Heart left ventricle (tissue), 16 donors: ENCODE measurements at regions of chr5 and their contacts with region 1.

Region 1: GRCh38 chr5:173283318-173284288 is 44.6 kb downstream of the STC2 start:
- DNase-seq: peak; percentile 78 to 92 (median 87)
- ATAC-seq: peak; percentile 49 to 89 (median 89)
- H3K4me3 ChIP-seq: peak overlapping the region in 10 of 12 donors; percentile 16 to 45 (median 36)
- H3K27ac ChIP-seq: peak overlapping the region in 8 of 12 donors; percentile 12 to 74 (median 63)
- H3K4me1 ChIP-seq: peaks cover 0 to 27% (median 4%) of the 10 kb centered on the region in 12 donors
- H3K27me3 ChIP-seq: peaks cover 0 to 45% (median 5%) of the 10 kb centered on the region in 9 donors
- CTCF ChIP-seq: peak; percentile 70 to 91 (median 73)
- POLR2A ChIP-seq: no peak

Region 2: DNA sequence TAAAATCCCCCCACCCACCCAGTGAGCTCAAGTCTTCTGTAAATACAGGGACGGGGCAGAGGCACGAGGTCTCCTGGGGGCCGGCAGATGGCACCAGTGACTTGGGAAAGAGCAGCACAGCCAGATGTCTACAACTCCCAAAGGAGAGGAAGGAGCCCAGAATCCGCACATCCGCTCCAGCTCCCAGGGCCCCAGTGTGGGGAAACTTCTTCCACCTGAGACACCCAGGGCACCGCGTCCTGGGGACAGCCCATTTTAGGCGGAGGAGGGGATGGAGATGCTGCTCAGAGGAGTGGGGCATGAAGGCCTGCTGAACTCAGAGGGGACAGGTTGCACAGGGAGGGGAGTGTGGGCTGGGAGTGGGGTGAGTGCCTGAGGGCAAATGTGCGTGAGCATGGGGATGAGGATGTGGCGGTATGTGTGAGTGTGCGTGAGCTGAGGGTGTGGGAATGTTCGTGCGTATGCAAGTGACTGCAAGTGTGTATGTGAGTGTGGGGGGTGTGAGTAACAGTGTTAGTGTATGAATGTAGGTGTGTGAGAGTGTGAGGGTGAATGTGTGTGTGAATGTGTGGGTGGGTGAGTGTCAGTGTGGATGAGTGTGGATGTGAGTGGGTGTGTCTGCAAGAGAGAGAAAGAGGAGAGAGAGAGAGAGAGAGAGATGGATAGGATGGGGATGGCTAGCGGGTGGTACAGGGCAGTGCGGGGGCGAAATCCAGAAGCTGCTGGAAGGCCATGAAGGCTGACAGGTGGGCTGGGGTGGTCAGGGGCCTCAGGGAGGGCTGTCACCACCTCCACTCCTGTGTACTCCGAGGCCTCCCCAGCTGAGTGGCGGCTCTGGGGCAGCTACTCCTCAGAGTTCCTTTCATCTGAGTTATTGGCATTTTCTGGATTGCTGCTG is 576.1 kb before region 1 on chr5:
- intact Hi-C with region 1: loop called in 7 of 10 experiments (anchors 5 to 10 kb)
- DNase-seq: peak in 2 of 5 donors; percentile 57 to 65
- ATAC-seq: peak; percentile 28 to 78 (median 76)
- H3K4me3 ChIP-seq: no peak overlapping the region
- H3K27ac ChIP-seq: no peak overlapping the region
- H3K4me1 ChIP-seq: no peaks in the 10 kb centered on the region
- H3K27me3 ChIP-seq: no peaks in the 10 kb centered on the region
- CTCF ChIP-seq: peak; percentile 13 to 54 (median 40)
- POLR2A ChIP-seq: no peak

Region 3: GRCh38 chr5:172984243-172984953 is 299.2 kb before region 1 on chr5:
- intact Hi-C with region 1: loop called in 9 of 10 experiments (anchors 5 to 10 kb)
- DNase-seq: peak in 4 of 5 donors; percentile 51 to 66 (median 56)
- ATAC-seq: peak; percentile 13 to 72 (median 60)
- H3K4me3 ChIP-seq: peak overlapping the region; percentile 71 to 99 (median 88)
- H3K27ac ChIP-seq: peak overlapping the region; percentile 81 to 98 (median 94)
- H3K4me1 ChIP-seq: peaks cover 0 to 53% (median 16%) of the 10 kb centered on the region in 12 donors
- H3K27me3 ChIP-seq: no peaks in the 10 kb centered on the region
- CTCF ChIP-seq: peak in 10 of 12 donors; percentile 6 to 44 (median 30)
- POLR2A ChIP-seq: no peak

Region 4: GRCh38 chr5:173010547-173011464 is 272.8 kb before region 1 on chr5:
- intact Hi-C with region 1: loop called in 2 of 10 experiments (anchors 2 kb)
- DNase-seq: peak; percentile 63 to 72 (median 70)
- ATAC-seq: peak; percentile 82 to 92 (median 88)
- H3K4me3 ChIP-seq: no peak overlapping the region
- H3K27ac ChIP-seq: peak overlapping the region in 3 of 12 donors; percentile 26 to 68 (median 44)
- H3K4me1 ChIP-seq: peaks cover 0 to 90% (median 32%) of the 10 kb centered on the region in 12 donors
- H3K27me3 ChIP-seq: no peaks in the 10 kb centered on the region
- CTCF ChIP-seq: peak; percentile 43 to 75 (median 64)
- POLR2A ChIP-seq: no peak

Region 5: GRCh38 chr5:173163219-173163618 is 120.4 kb before region 1 on chr5:
- intact Hi-C with region 1: loop called (anchors 1 to 10 kb)
- DNase-seq: peak in 4 of 5 donors; percentile 38 to 64 (median 48)
- ATAC-seq: peak; percentile 38 to 70 (median 49)
- H3K4me3 ChIP-seq: no peak overlapping the region
- H3K27ac ChIP-seq: peak overlapping the region in 10 of 12 donors; percentile 11 to 86 (median 50)
- H3K4me1 ChIP-seq: peaks cover 0 to 37% (median 13%) of the 10 kb centered on the region in 12 donors
- H3K27me3 ChIP-seq: no peaks in the 10 kb centered on the region
- CTCF ChIP-seq: peak in 3 of 12 donors; percentile 6 to 23 (median 8)
- POLR2A ChIP-seq: no peak

Region 6: GRCh38 chr5:173232499-173233346 is 50.9 kb before region 1 on chr5:
- intact Hi-C with region 1: loop called in 5 of 10 experiments (anchors 1 to 5 kb)
- DNase-seq: peak in 1 of 5 donors; percentile 34
- ATAC-seq: no peak
- H3K4me3 ChIP-seq: peak overlapping the region; percentile 47 to 93 (median 63)
- H3K27ac ChIP-seq: peak overlapping the region in 11 of 12 donors; percentile 46 to 95 (median 89)
- H3K4me1 ChIP-seq: peaks cover 0 to 58% (median 26%) of the 10 kb centered on the region in 12 donors
- H3K27me3 ChIP-seq: peaks cover 14 to 98% (median 69%) of the 10 kb centered on the region in 9 donors
- CTCF ChIP-seq: no peak
- POLR2A ChIP-seq: no peak